ENCODE measurements at regions of chrX and their contacts with region 1.

Region 1: GRCh38 chrX:103404231-103405208 is 28.2 kb downstream of the BEX3 start:
- DNase-seq: peak; percentile 15
- ATAC-seq: peak; percentile 67
- H3K4me3 Mint-ChIP-seq: peak overlapping the region; percentile 84
- H3K27ac Mint-ChIP-seq: no peak overlapping the region
- H3K4me1 Mint-ChIP-seq: peaks cover 9% of the 10 kb centered on the region
- H3K27me3 Mint-ChIP-seq: no peaks in the 10 kb centered on the region
- CTCF ChIP-seq: no peak

Region 2: DNA sequence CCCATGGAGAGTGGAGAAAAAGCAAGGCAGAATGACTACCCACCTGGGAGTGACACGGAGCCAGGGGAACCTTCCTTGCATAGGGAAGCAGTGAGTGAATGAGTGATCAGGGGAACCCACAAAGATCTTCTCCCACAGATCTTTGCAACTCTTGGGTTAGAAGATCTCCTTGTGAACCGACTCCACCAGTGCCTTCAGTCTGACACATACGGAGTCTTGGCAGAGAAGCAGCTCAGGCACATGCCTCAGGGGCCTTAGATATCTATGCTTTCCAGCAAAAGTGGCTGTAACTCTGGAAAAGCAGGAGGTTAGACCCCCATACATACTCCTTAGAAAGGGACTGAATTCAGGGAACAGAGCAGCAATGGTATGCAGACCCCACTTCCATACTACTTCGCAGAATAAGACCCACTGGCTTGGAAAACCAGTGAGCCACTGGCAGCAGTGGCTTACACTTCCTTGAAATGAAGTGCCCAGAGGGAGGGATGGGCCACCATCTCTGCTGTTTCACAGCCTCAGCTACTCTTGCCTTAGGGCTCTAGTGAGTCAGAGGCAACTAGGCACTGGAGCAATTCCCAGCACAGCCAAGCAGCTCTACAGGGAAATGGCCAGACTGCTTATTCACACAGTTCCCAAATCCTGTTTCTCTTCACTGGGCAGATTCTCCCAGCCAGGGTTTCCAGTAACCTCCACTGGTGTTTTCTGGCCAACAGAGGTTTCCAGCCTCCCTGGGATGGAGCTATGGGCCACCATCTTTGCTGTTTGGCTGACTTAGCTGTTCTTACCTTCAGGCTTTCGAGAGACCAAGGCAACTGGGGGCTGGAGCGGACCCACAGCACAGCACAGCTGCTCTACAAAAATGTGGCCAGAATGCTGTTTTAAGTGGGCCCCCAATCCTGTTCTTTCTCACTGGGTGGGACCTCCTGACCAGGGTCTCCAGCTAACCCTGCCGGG is 1361.9 kb before region 1 on chrX:
- CTCF ChIA-PET with region 1: no interaction called
- POLR2A ChIA-PET with region 1: no interaction called
- intact Hi-C with region 1: no loop called
- DNase-seq: no peak
- ATAC-seq: no peak
- H3K4me3 Mint-ChIP-seq: no peak overlapping the region
- H3K27ac Mint-ChIP-seq: no peak overlapping the region
- H3K4me1 Mint-ChIP-seq: no peaks in the 10 kb centered on the region
- H3K27me3 Mint-ChIP-seq: no peaks in the 10 kb centered on the region
- CTCF ChIP-seq: no peak

Region 3: GRCh38 chrX:103464774-103465117 is 60.2 kb after region 1 on chrX:
- CTCF ChIA-PET with region 1: no interaction called
- POLR2A ChIA-PET with region 1: no interaction called
- intact Hi-C with region 1: loop called (anchors 2 kb)
- DNase-seq: peak; percentile 26
- ATAC-seq: peak; percentile 87
- H3K4me3 Mint-ChIP-seq: peak overlapping the region; percentile 79
- H3K27ac Mint-ChIP-seq: no peak overlapping the region
- H3K4me1 Mint-ChIP-seq: peaks cover 10% of the 10 kb centered on the region
- H3K27me3 Mint-ChIP-seq: no peaks in the 10 kb centered on the region
- CTCF ChIP-seq: no peak